Right lobe of liver (tissue), 6 donors: ENCODE measurements at regions of chr3 and their contacts with region 1.

Region 1: DNA sequence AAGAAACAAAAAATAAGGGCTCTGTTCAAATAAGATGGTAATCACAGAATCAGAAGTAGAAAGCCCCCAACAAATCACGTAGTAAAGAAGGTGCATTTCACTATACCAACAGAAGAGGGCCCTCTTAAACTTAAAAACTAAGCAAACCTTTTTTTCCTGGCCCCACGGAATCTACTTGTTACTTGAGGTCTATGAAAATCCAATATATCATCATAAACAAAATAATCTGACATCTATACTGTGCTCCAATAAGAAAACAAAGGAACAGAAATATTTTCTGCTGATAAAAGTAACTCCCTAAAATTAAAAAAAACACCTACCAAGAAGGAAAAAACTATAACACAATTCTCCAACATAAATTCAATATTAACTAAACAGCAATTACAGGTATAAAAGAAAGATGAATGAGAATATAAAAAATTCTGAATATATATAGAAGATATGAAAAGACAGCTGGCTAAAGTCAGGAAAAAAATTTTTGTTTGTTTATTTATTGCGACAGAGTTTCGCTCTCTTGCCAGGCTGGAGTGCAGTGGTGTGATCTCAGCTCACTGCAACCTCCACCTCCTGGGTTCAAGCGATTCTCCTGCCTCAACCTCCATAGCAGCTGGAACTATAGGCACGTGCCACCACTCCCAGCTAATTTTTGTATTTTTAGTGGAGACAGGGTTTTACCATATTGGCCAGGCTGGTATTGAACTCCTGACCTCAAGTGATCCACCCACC is 81.8 kb downstream of the CLASP2 start:
- DNase-seq: no peak
- ATAC-seq: peak; percentile 77 to 91 (median 86)
- H3K4me3 ChIP-seq: no peak overlapping the region
- H3K27ac ChIP-seq: peak overlapping the region in 2 of 3 donors; percentile 15 to 39
- H3K4me1 ChIP-seq: peaks cover 0 to 9% (median 0%) of the 10 kb centered on the region in 4 donors
- H3K27me3 ChIP-seq: no peaks in the 10 kb centered on the region
- CTCF ChIP-seq: peak; percentile 58 to 66 (median 63)
- POLR2A ChIP-seq: no peak

Region 2: GRCh38 chr3:33717866-33718594 is 81.7 kb after region 1 on chr3 and contains the start of gene CLASP2:
- intact Hi-C with region 1: loop called in 1 of 2 experiments (anchors 10 kb)
- DNase-seq: peak; percentile 90 to 94 (median 91)
- ATAC-seq: peak; percentile 88 to 94 (median 92)
- H3K4me3 ChIP-seq: peak within 1 kb of the TSS; percentile 62 to 83 (median 82)
- H3K27ac ChIP-seq: peak within 1 kb of the TSS; percentile 96 to 99 (median 98)
- H3K4me1 ChIP-seq: peaks cover 0 to 9% (median 4%) of the 10 kb centered on the region in 4 donors
- H3K27me3 ChIP-seq: no peaks in the 10 kb centered on the region
- CTCF ChIP-seq: no peak
- POLR2A ChIP-seq: peak; percentile 66
- total RNA-seq, gene CLASP2: 15.0 to 19.2 (median 16.5) TPM

Region 3: DNA sequence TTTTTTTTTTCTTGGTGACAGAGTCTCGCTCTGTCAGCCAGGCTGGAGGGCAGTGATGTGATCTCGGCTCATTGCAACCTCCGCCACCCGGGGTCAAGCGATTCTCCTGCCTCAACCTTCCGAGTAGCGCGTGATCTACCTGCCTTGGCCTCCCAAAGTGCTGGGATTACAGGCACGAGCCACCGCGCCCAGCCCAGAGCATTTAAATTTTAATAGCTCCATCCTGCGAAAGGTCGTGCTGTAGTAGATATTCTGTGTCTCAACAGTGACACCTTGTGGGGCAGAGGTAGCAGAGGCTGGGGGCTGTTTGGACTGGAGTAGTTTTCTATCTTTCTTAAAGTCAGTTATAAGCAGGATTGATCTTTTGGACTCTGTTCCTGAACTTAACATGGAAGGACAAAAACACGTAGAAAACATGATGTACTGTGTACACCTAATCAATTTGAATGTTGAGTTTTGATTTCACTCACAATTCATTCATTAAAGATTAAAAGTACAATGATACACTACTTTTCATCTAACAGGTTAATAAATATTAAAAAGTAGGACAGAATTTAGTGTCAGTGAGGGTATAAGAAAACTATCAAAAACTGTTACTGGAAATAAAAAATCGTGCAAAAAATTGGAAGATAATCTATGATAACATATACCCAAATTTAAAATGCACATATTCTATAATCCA is 151.2 kb after region 1 on chr3:
- intact Hi-C with region 1: loop called (anchors 10 kb)
- DNase-seq: peak in 2 of 3 donors; percentile 36 to 59
- ATAC-seq: peak; percentile 97 to 99 (median 98)
- H3K4me3 ChIP-seq: peak overlapping the region in 1 of 3 donors; percentile 8
- H3K27ac ChIP-seq: no peak overlapping the region
- H3K4me1 ChIP-seq: peaks cover 0 to 8% (median 0%) of the 10 kb centered on the region in 4 donors
- H3K27me3 ChIP-seq: no peaks in the 10 kb centered on the region
- CTCF ChIP-seq: peak; percentile 71 to 83 (median 80)
- POLR2A ChIP-seq: no peak